Naive thymus-derived CD4-positive, alpha-beta T cell (primary cell): ENCODE measurements at regions of chr12 and their contacts with region 1.

Region 1: GRCh38 chr12:121494093-121494787 is 86.6 kb downstream of the KDM2B start:
- DNase-seq: peak; percentile 14 to 62 (median 45)
- ATAC-seq: peak; percentile 67
- H3K4me3 ChIP-seq: no peak overlapping the region
- H3K4me3 Mint-ChIP-seq: no peak overlapping the region
- H3K27ac ChIP-seq: no peak overlapping the region
- H3K27ac Mint-ChIP-seq: no peak overlapping the region
- H3K4me1 ChIP-seq: peaks cover 0 to 11% of the 10 kb centered on the region in 2 donors
- H3K4me1 Mint-ChIP-seq: peaks cover 12 to 24% (median 20%) of the 10 kb centered on the region in 7 donors
- H3K27me3 ChIP-seq: no peaks in the 10 kb centered on the region
- H3K27me3 Mint-ChIP-seq: no peaks in the 10 kb centered on the region

Region 2: DNA sequence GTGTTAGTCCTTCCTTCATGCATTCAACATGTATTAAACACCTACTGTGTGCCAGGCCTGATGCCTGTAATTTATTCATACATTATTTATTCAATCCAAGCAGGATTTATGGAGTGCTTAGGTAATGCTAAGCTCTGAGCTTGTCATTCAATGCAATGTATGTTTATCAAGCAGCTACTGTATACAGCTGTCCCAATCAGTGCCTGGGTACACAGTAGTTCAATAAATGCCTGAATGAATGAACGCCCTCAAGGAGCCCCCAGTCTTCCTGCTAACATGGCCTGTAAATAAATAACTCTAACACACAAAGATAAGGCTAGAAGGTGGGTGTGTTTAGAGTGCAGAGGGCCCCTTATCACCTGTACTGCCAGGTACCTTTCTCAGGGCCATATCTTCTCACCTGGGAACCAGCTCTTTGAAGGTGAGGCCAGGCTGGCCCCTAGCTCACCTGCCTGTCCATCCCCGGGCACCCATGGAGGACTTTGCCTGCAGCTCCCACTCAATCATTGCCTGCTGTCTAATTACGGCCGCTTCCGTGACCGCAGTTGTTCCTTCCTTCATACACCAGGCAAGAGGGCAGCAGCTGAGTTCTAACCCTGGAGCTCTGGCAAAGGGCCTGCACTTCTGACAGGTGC is 106.6 kb after region 1 on chr12:
- CTCF ChIA-PET with region 1: no interaction called
- POLR2A ChIA-PET with region 1: no interaction called
- intact Hi-C with region 1: no loop called
- DNase-seq: no peak
- ATAC-seq: no peak
- H3K4me3 ChIP-seq: no peak overlapping the region
- H3K4me3 Mint-ChIP-seq: no peak overlapping the region
- H3K27ac ChIP-seq: no peak overlapping the region
- H3K27ac Mint-ChIP-seq: peak overlapping the region in 1 of 9 donors; percentile 30
- H3K4me1 ChIP-seq: no peaks in the 10 kb centered on the region
- H3K4me1 Mint-ChIP-seq: peaks cover 5 to 13% (median 7%) of the 10 kb centered on the region in 7 donors
- H3K27me3 ChIP-seq: no peaks in the 10 kb centered on the region
- H3K27me3 Mint-ChIP-seq: no peaks in the 10 kb centered on the region

Region 3: DNA sequence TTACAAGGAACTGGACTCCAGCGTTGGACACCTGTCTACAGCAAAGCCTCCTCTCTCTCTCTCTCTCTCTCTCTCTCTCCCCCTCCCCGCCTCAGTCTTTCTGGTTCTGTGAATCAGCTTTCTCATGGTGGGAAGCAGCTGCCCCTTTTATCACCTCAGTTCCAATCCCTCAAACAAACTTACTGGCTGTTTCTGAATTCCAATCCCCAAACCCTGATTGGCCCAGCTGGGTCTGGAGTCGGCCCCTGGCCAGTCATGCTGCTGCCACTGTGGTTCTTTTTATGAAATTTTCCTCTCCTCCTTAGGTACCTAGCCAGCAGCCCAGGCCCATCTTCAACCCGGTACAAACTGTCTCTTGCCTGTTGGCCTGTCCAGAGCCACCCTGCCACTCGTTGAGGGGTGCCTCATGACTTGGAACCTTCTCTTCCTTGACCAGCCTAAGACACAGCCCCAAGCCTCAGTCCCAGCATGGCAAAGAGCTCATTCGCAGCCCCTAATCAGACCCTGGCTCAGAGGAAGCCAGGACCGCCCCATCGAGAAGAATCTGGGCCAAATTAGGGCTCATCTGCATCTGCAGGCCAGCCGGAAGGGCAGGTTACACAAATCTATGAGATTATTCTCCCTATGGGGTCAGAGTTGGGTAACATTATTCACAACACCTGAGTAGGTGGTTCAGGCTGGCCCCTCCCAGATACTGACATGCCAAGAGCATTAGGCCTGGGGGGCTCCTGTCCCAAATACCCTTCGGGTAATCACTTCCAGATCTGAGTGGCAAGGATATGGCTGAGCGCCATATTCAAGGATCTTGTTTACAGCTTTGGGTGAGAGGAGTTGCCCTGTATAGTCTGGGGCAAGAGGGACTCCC is 184.7 kb after region 1 on chr12:
- CTCF ChIA-PET with region 1: interaction called, 5 read pairs
- POLR2A ChIA-PET with region 1: no interaction called
- intact Hi-C with region 1: loop called (anchors 1 kb)
- DNase-seq: no peak
- ATAC-seq: no peak
- H3K4me3 ChIP-seq: no peak overlapping the region
- H3K4me3 Mint-ChIP-seq: no peak overlapping the region
- H3K27ac ChIP-seq: no peak overlapping the region
- H3K27ac Mint-ChIP-seq: peak overlapping the region in 3 of 9 donors; percentile 34 to 59 (median 57)
- H3K4me1 ChIP-seq: no peaks in the 10 kb centered on the region
- H3K4me1 Mint-ChIP-seq: peaks cover 4 to 14% (median 6%) of the 10 kb centered on the region in 7 donors
- H3K27me3 ChIP-seq: no peaks in the 10 kb centered on the region
- H3K27me3 Mint-ChIP-seq: no peaks in the 10 kb centered on the region